ENCODE measurements at regions of chr17 and their contacts with region 1.

Region 1: GRCh38 chr17:47949946-47950345 is 7.7 kb downstream of the PRR15L start:
- DNase-seq: peak in 2 of 3 donors; percentile 57 to 65
- ATAC-seq: no peak
- H3K4me3 ChIP-seq: no peak overlapping the region
- H3K4me1 ChIP-seq: peaks cover 69% of the 10 kb centered on the region
- CTCF ChIP-seq: no peak

Region 2: DNA sequence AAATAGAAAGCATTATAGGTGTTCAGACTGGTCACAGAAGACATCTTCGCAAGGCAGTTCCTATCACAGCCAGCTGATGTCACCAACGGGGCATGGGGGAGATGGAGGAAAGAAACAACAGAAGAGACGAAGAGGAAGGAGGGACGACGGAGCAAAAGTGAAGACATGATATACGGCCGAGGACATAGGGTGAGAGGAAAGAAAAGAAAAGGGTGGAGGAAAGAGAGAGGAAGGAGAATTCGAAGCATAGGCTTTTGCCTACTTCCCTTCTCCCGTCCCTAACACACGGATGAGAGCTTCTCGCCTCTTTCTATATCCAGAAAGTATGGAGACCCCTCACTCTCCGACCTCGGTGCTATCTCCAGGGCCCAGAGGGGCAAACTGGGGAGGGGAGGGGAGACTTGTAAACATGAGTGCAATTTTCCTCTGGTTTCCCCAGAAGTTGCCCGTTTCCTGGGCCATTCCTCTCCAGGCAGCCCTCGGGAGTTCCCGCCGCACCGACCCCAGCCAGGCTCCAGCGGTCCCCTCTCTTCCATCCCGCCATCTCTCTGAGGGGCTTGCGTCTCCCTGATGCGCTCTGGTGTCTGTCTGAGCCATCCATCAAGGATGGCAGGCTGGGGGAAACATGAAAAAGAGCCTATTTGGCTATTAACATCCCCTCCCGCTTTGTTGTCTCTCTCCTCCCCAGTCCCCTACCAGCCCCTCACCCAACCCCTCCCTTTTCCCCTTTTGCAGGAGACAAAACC is 61.6 kb after region 1 on chr17:
- intact Hi-C with region 1: loop called in 1 of 2 experiments (anchors 5 kb)
- DNase-seq: peak in 1 of 3 donors; percentile 48
- ATAC-seq: peak; percentile 77
- H3K4me3 ChIP-seq: no peak overlapping the region
- H3K4me1 ChIP-seq: peaks cover 6% of the 10 kb centered on the region
- CTCF ChIP-seq: peak; percentile 8